ENCODE measurements at regions of chr11 and their contacts with region 1.

Region 1: GRCh38 chr11:18395735-18396504 is 1.6 kb downstream of the LDHA start:
- DNase-seq: peak; percentile 88
- H3K4me3 ChIP-seq: peak overlapping the region; percentile 100
- CTCF ChIP-seq: no peak

Region 2: GRCh38 chr11:18310800-18311340 is 85.0 kb before region 1 on chr11:
- CTCF ChIA-PET with region 1: no interaction called
- POLR2A ChIA-PET with region 1: interaction called, 51 read pairs
- DNase-seq: no peak
- H3K4me3 ChIP-seq: no peak overlapping the region
- CTCF ChIP-seq: no peak

Region 3: DNA sequence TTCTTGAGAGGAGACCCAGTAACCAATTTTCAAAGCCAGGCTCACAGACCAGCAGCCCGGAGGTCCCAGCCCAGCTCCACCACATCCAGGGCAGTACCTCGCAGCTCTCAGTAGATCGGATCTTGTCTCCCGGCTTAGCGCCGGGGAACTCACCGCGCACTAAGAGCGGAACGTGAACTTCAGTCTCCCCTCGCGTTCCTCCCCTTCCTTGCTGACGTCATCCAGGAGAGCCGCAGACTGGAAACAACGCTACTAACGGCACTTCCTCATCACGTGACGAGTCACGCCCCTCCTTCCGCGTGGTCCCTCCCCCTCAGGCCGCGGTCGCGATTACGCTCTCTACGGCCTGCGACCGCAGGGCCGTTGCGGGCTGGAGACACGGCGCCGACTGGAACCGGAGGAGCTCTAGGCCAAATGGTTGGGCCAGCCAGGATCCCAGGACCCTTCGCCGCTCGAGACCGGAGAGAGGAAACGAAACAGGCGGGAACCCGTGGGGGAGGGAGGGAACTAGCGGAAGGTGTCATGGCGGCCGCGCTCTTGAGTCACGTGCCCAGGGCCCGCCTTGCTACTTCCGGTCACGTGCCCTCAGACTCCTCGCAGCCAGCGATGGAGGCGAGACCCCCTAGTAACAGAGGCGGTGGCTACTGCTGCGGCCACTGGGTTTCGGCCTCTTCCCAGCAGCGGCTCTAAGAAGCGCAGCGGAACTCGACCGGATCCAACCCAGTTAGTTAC is 73.8 kb before region 1 on chr11 and contains the starts of genes GTF2H1 and HPS5:
- CTCF ChIA-PET with region 1: no interaction called
- POLR2A ChIA-PET with region 1: interaction called, 51 read pairs
- DNase-seq: peak; percentile 91
- H3K4me3 ChIP-seq: peak within 1 kb of the TSS; percentile 94
- CTCF ChIP-seq: no peak

Region 4: DNA sequence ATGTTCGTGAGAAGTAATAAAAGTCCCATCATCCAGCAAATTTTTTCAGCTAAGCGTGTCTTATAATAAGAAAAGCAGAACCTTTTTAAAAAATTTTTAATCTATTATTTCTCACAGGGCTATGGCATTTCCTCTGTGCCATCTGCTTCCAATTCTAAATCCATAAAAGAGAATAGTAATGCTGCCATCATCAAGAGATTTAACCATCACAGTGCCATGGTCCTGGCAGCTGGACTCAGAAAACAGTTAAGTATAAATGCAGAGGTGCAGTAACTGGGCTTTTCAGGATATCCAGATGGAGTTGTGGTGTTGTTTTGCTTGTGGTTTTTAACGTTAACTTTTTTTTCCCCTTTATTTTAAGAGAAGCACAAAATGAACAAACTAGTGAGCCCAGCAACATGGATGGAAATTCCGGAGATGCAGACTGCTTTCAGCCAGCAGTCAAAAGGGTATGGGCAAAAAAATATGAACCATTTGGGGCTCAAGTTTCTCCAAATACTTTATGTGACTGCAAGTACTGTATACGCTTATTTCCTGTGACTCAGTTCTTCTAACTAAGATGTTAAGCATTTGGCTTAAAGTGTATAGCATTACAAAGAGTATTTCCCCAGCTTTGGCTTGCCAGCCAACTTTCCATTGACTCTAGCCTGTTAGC is 48.3 kb before region 1 on chr11:
- CTCF ChIA-PET with region 1: interaction called, 4 read pairs
- POLR2A ChIA-PET with region 1: interaction called, 46 read pairs
- DNase-seq: peak; percentile 65
- H3K4me3 ChIP-seq: peak overlapping the region; percentile 15
- CTCF ChIP-seq: no peak

Region 5: DNA sequence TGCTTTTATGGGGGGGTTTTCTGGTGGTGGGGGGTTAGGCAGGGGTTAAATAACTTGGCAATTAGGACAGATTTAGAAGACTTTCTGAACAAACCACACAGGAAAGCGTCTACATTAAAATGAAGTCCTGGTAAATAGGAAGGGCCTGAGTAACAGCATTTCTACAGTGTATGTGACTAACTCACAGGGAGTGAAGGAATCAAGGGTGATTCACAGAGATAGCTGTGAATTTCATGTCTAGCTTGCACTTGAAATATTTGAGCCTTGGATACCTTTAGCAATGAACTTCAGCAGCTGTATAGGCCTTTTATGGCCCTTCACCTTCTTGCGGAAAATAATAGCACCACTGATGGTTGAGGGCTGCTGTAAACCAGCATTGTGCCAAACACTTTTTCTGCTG is 27.7 kb before region 1 on chr11:
- CTCF ChIA-PET with region 1: no interaction called
- POLR2A ChIA-PET with region 1: interaction called, 14 read pairs
- DNase-seq: no peak
- H3K4me3 ChIP-seq: no peak overlapping the region
- CTCF ChIP-seq: no peak

Region 6: GRCh38 chr11:18383388-18384156 is 12.3 kb before region 1 on chr11:
- CTCF ChIA-PET with region 1: interaction called, 3 read pairs
- POLR2A ChIA-PET with region 1: interaction called, 226 read pairs
- DNase-seq: peak; percentile 90
- H3K4me3 ChIP-seq: peak overlapping the region; percentile 4; the same call in 1 of the 2 replicates
- CTCF ChIP-seq: no peak

Region 7: GRCh38 chr11:18408558-18409242 is 12.8 kb after region 1 on chr11:
- CTCF ChIA-PET with region 1: interaction called, 11 read pairs
- POLR2A ChIA-PET with region 1: interaction called, 11 read pairs
- DNase-seq: no peak
- H3K4me3 ChIP-seq: no peak overlapping the region
- CTCF ChIP-seq: no peak